ENCODE measurements at regions of chr1 and their contacts with region 1.

Region 1: GRCh38 chr1:10283318-10283984 is 73.1 kb downstream of the KIF1B start:
- DNase-seq: peak; percentile 17
- H3K4me3 Mint-ChIP-seq: no peak overlapping the region
- H3K27ac Mint-ChIP-seq: peak overlapping the region; percentile 76
- H3K4me1 Mint-ChIP-seq: peaks cover 26% of the 10 kb centered on the region
- H3K27me3 Mint-ChIP-seq: no peaks in the 10 kb centered on the region

Region 2: GRCh38 chr1:10132852-10133251 is 150.6 kb before region 1 on chr1:
- intact Hi-C with region 1: no loop called
- DNase-seq: no peak
- H3K4me3 Mint-ChIP-seq: no peak overlapping the region
- H3K27ac Mint-ChIP-seq: no peak overlapping the region
- H3K4me1 Mint-ChIP-seq: no peaks in the 10 kb centered on the region
- H3K27me3 Mint-ChIP-seq: no peaks in the 10 kb centered on the region

Region 3: DNA sequence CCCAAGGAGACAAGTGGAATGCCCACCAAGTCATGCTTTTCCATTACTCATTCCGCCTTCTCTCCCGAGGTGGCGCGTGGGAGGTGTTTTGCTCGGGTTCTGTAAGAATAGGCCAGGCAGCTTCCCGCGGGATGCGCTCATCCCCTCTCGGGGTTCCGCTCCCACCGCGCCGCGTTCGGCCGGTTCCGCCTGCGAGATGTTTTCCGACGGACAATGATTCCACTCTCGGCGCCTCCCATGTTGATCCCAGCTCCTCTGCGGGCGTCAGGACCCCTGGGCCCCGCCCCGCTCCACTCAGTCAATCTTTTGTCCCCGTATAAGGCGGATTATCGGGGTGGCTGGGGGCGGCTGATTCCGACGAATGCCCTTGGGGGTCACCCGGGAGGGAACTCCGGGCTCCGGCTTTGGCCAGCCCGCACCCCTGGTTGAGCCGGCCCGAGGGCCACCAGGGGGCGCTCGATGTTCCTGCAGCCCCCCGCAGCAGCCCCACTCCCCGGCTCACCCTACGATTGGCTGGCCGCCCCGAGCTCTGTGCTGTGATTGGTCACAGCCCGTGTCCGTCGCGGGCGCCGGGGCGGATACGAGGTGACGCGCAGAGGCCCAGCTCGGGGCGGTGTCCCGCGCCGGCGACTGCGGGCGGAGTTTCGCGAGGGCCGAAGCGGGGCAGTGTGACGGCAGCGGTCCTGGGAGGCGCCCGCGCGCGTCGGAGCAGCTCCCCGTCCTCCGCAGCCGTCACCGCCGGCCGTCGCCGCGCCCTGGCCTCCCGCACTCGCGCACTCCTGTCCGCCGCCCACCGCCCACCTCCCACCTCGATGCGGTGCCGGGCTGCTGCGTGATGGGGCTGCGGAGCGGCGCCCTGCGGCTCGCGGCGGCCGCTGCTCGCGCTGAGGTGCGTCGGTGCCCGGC is 73.3 kb before region 1 on chr1 and contains the start of gene KIF1B:
- intact Hi-C with region 1: loop called (anchors 2 kb)
- DNase-seq: peak; percentile 95
- H3K4me3 Mint-ChIP-seq: peak within 1 kb of the TSS; percentile 89
- H3K27ac Mint-ChIP-seq: peak within 1 kb of the TSS; percentile 84
- H3K4me1 Mint-ChIP-seq: peaks cover 33% of the 10 kb centered on the region
- H3K27me3 Mint-ChIP-seq: peaks cover 4% of the 10 kb centered on the region
- total RNA-seq, gene KIF1B: 21.9 and 23.8 TPM in 2 replicates

Region 4: DNA sequence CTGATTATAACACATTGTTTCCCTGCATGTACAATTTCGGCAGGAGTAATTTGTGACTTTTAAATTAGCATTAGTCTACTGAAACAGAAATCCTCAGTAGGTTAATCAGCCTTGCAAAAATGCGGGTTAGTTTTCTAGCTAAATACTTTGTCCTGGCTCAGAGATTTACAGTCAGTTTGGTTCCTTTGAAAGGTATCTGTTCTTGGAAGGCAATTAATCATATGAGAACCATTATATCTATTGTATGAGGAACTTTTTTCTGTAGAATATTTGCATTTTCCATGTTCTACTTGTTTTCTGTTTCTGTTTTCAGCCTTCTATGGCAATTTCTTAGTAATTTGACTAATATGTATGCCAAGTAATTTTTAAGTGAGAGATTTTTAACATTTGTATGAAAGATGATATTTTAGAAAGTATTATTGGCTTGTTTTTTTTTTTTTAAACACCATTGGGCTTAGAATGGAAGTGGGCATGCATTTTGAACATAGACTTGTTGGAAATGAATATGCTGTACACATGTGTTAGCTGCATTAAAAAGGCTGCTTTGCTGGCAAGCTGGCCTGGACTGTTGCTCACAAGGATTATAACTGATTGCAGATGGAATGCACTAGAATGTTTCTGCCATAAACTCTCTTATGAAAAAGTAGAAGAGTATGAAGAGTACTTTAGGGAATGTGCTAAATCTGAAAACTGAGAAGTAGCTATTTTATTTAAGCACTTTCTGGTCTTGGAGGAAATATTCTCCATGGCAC is 46.9 kb before region 1 on chr1:
- intact Hi-C with region 1: loop called (anchors 5 kb)
- DNase-seq: no peak
- H3K4me3 Mint-ChIP-seq: no peak overlapping the region
- H3K27ac Mint-ChIP-seq: peak overlapping the region; percentile 44
- H3K4me1 Mint-ChIP-seq: peaks cover 11% of the 10 kb centered on the region
- H3K27me3 Mint-ChIP-seq: no peaks in the 10 kb centered on the region

Region 5: GRCh38 chr1:10530281-10530740 is 246.9 kb after region 1 on chr1:
- intact Hi-C with region 1: no loop called
- DNase-seq: no peak
- H3K4me3 Mint-ChIP-seq: no peak overlapping the region
- H3K27ac Mint-ChIP-seq: no peak overlapping the region
- H3K4me1 Mint-ChIP-seq: peaks cover 14% of the 10 kb centered on the region
- H3K27me3 Mint-ChIP-seq: no peaks in the 10 kb centered on the region